ENCODE measurements at regions of chr16 and their contacts with region 1.

Region 1: DNA sequence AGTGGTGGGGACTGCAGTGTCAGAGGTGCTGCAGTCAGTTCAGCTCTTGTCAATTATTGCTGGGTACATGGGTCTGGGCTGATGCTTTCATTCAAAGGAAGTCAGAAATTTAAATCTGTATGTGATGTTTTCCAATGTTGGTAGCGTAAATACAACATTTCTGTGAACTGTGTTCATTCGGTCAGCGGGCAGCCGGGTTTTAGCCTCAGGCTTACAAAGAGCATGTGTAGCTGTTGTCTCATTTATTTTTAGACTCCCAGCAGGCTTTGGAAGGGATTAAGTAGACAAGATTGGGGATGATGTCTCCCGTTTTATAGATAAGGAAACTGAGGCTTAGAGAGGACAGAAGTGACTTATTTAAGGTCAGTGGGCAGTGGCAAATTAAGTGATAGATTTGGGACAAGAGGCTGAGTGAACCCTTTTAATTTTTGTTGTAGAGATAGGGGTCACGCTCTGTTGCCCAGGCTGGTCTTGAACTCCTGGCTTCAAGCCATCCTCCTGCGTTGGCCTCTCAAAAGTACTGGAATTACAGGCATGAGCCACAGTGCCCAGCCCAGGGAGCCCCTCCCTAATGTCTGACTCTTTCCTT is 8.1 kb downstream of the AQP8 start:
- DNase-seq: no peak
- CTCF ChIP-seq: no peak

Region 2: GRCh38 chr16:24834459-24835335 is 390.1 kb before region 1 on chr16:
- CTCF ChIA-PET with region 1: interaction called, 10 read pairs
- POLR2A ChIA-PET with region 1: no interaction called
- DNase-seq: peak; percentile 52
- CTCF ChIP-seq: peak; percentile 62

Region 3: GRCh38 chr16:25210758-25211157 is 14.1 kb before region 1 on chr16:
- CTCF ChIA-PET with region 1: interaction called, 37 read pairs
- POLR2A ChIA-PET with region 1: no interaction called
- DNase-seq: no peak
- CTCF ChIP-seq: no peak